ENCODE measurements at regions of chr4 and their contacts with region 1.

Region 1: DNA sequence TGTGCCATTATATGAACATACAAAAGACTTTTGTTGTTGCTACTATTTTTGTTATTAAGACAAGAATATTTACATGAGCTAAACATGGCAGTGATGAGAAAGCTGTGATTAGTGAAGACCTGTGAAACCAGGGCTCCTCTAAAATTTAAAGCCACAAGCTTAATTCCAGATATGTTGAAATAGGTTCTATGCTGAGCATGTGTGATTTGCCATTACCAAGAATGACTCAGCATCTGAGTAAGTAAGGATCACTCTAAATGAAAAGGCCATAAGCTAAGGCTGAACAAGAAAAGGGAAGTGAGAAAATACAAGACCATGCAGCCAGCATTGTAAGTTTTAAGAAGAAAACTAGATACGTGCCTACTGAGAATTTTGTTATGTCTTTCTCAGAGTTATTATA is 75.9 kb upstream of the CAMK2D start:
- DNase-seq: peak; percentile 94
- ATAC-seq: peak; percentile 99
- H3K4me3 ChIP-seq: no peak overlapping the region
- H3K27ac ChIP-seq: peak overlapping the region; percentile 92
- H3K4me1 ChIP-seq: peaks cover 18% of the 10 kb centered on the region
- H3K27me3 ChIP-seq: no peaks in the 10 kb centered on the region
- CTCF ChIP-seq: no peak
- EP300 ChIP-seq: peak; percentile 59 to 98; a peak in 3 of 4 replicates
- POLR2A ChIP-seq: no peak
- RAD21 ChIP-seq: no peak

Region 2: DNA sequence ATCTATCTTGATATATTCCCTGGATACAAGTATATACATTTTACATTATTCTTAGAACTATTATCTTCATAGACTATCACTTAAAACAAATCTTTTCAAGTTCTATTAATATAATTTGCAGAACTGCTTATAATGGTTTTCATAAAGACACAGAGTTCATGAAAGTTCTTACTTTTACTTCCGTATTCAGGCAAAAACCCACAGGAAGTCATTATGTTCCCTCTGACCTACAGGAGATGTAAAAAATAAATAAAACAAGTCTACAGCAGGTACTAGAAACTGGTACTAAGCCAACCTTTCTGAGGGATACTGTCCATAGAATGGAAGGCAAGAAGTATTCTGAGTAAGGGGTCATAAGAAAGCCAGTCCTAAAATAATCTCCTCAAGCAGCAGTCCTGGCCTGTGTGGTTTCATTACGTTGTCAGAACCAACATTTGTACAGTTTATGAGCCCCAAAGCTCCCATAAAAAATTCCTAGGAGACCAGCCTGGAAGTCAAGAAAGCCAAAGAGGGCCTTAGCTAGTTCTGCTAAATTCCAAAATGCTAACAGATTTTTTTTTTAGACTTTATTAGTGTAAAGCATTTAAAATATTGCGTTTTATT is 144.5 kb before region 1 on chr4:
- CTCF ChIA-PET with region 1: no interaction called
- POLR2A ChIA-PET with region 1: no interaction called
- RAD21 ChIA-PET with region 1: no interaction called
- SMC1A ChIA-PET with region 1: no interaction called
- in situ Hi-C with region 1: no loop called
- intact Hi-C with region 1: no loop called
- DNase-seq: no peak
- ATAC-seq: peak; percentile 89
- H3K4me3 ChIP-seq: no peak overlapping the region; the same call in 1 of the 2 replicates
- H3K27ac ChIP-seq: peak overlapping the region; percentile 52
- H3K4me1 ChIP-seq: peaks cover 16% of the 10 kb centered on the region
- H3K27me3 ChIP-seq: no peaks in the 10 kb centered on the region
- CTCF ChIP-seq: no peak
- EP300 ChIP-seq: peak in 1 of 2 experiments; percentile 56; a peak in 1 of 4 replicates
- POLR2A ChIP-seq: no peak
- RAD21 ChIP-seq: no peak

Region 3: DNA sequence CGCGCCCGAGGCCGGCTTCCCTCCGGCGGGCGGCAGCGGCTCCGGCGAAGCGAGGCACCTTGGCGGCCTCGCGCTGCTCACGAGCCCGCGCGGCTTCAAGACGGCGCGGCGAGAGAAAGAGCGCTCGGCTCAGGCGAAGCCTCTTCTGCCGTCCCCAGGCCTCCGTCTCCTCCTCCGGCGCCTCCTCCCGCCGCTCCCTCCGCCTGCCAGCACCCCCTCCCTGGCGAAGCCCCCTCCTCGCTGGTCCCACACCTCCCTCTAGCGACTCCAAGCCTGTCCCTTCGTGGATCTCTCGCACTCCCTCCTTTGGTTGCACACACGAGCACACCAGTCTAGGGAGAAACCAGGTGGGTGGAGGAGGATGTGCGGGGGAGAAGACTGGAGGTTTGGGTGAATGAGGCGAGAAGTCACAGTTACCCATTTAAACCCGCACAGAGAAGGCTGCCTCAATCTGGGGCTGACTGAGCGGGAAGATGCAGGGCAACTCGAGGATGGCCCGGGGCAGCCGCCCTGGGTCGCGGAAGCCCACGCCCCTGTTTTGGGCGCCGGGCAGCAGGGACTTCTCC is 75.7 kb before region 1 on chr4 and contains the start of gene CAMK2D:
- CTCF ChIA-PET with region 1: interaction called, 5 read pairs
- POLR2A ChIA-PET with region 1: interaction called, 3 read pairs
- RAD21 ChIA-PET with region 1: interaction called, 10 read pairs
- SMC1A ChIA-PET with region 1: interaction called, 11 read pairs
- in situ Hi-C with region 1: no loop called
- intact Hi-C with region 1: loop called (anchors 1 kb)
- DNase-seq: peak; percentile 81
- ATAC-seq: peak; percentile 56
- H3K4me3 ChIP-seq: peak within 1 kb of the TSS; percentile 99
- H3K27ac ChIP-seq: peak within 1 kb of the TSS; percentile 98
- H3K4me1 ChIP-seq: no peaks in the 10 kb centered on the region
- H3K27me3 ChIP-seq: no peaks in the 10 kb centered on the region
- CTCF ChIP-seq: peak; percentile 60 to 95 (median 69)
- EP300 ChIP-seq: peak in 1 of 2 experiments; percentile 33; a peak in 2 of 4 replicates
- POLR2A ChIP-seq: no peak
- RAD21 ChIP-seq: peak; percentile 89
- polyA plus RNA-seq, gene CAMK2D: 6.9 to 10.2 TPM

Region 4: GRCh38 chr4:113781439-113782040 is 55.9 kb before region 1 on chr4:
- CTCF ChIA-PET with region 1: interaction called, 17 read pairs
- POLR2A ChIA-PET with region 1: interaction called, 7 read pairs
- RAD21 ChIA-PET with region 1: interaction called, 14 read pairs
- SMC1A ChIA-PET with region 1: interaction called, 31 read pairs
- in situ Hi-C with region 1: no loop called
- intact Hi-C with region 1: loop called (anchors 5 kb)
- DNase-seq: no peak
- ATAC-seq: peak; percentile 80
- H3K4me3 ChIP-seq: no peak overlapping the region
- H3K27ac ChIP-seq: no peak overlapping the region
- H3K4me1 ChIP-seq: no peaks in the 10 kb centered on the region
- H3K27me3 ChIP-seq: no peaks in the 10 kb centered on the region
- CTCF ChIP-seq: peak; percentile 45 to 47 (median 47); a peak in 4 of 6 replicates
- EP300 ChIP-seq: no peak
- POLR2A ChIP-seq: no peak
- RAD21 ChIP-seq: peak; percentile 65

Region 5: GRCh38 chr4:113869743-113870375 is 32.5 kb after region 1 on chr4:
- CTCF ChIA-PET with region 1: interaction called, 3 read pairs
- POLR2A ChIA-PET with region 1: interaction called, 7 read pairs
- RAD21 ChIA-PET with region 1: interaction called, 6 read pairs
- SMC1A ChIA-PET with region 1: interaction called, 11 read pairs
- in situ Hi-C with region 1: no loop called
- intact Hi-C with region 1: no loop called
- DNase-seq: peak; percentile 54
- ATAC-seq: peak; percentile 97
- H3K4me3 ChIP-seq: no peak overlapping the region
- H3K27ac ChIP-seq: peak overlapping the region; percentile 66
- H3K4me1 ChIP-seq: peaks cover 3% of the 10 kb centered on the region; the same call in 1 of the 2 replicates
- H3K27me3 ChIP-seq: no peaks in the 10 kb centered on the region
- CTCF ChIP-seq: no peak
- EP300 ChIP-seq: no peak
- POLR2A ChIP-seq: no peak
- RAD21 ChIP-seq: no peak

Region 6: DNA sequence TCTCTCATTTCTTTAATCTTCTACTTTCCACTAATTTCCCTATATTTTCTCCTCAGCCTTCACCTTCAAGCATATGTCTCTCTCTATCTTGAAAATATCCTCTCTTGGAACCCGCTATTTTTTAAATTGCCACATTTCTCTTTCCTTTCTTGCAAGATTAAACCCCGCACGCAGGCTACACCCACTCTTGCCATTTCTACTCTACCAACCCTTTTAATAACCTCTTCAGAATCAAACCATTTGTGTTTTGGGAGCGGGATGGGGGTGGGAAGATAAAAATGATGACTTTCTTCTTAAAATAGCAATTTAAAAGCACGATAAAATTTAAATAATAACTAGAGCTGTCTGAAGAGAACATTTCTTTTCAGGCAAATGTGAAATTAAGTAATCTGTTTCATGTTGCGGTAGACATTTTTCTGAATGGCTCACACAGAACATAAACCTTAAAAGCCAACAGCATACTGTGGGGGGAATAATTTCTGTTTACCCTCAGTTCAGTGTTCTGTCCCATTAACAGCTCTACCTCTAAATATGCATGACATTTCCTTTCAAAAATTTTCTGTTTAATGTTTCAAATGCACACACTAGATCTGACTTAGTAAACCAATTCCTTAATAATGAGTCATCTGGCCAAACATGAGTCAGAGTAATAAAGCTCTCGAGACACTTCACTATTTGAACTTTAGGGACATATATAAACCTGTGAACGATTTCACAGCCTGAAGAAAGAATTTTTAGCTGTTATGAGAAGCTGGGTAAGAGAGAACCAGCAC is 121.6 kb after region 1 on chr4:
- CTCF ChIA-PET with region 1: interaction called, 6 read pairs
- POLR2A ChIA-PET with region 1: no interaction called
- RAD21 ChIA-PET with region 1: interaction called, 7 read pairs
- SMC1A ChIA-PET with region 1: interaction called, 10 read pairs
- in situ Hi-C with region 1: no loop called
- intact Hi-C with region 1: no loop called
- DNase-seq: no peak
- ATAC-seq: peak; percentile 81
- H3K4me3 ChIP-seq: no peak overlapping the region
- H3K27ac ChIP-seq: no peak overlapping the region
- H3K4me1 ChIP-seq: no peaks in the 10 kb centered on the region
- H3K27me3 ChIP-seq: no peaks in the 10 kb centered on the region; a peak in 1 of 4 replicates
- CTCF ChIP-seq: no peak
- EP300 ChIP-seq: no peak
- POLR2A ChIP-seq: no peak
- RAD21 ChIP-seq: no peak

Region 7: GRCh38 chr4:114603497-114603896 is 766.1 kb after region 1 on chr4:
- CTCF ChIA-PET with region 1: no interaction called
- POLR2A ChIA-PET with region 1: no interaction called
- RAD21 ChIA-PET with region 1: no interaction called
- SMC1A ChIA-PET with region 1: no interaction called
- in situ Hi-C with region 1: no loop called
- intact Hi-C with region 1: loop called (anchors 10 kb)
- DNase-seq: peak; percentile 72
- ATAC-seq: peak; percentile 96
- H3K4me3 ChIP-seq: peak overlapping the region; percentile 4; the same call in 1 of the 2 replicates
- H3K27ac ChIP-seq: no peak overlapping the region
- H3K4me1 ChIP-seq: peaks cover 43% of the 10 kb centered on the region
- H3K27me3 ChIP-seq: peaks cover 2 to 10% of the 10 kb centered on the region in 2 experiments
- CTCF ChIP-seq: no peak
- EP300 ChIP-seq: peak; percentile 94 to 98
- POLR2A ChIP-seq: no peak
- RAD21 ChIP-seq: no peak